Activated naive CD4-positive, alpha-beta T cell treated with anti-CD3 and anti-CD28 coated beads for 36 hours (primary cell): ENCODE measurements at regions of chr10 and their contacts with region 1.

Region 1: DNA sequence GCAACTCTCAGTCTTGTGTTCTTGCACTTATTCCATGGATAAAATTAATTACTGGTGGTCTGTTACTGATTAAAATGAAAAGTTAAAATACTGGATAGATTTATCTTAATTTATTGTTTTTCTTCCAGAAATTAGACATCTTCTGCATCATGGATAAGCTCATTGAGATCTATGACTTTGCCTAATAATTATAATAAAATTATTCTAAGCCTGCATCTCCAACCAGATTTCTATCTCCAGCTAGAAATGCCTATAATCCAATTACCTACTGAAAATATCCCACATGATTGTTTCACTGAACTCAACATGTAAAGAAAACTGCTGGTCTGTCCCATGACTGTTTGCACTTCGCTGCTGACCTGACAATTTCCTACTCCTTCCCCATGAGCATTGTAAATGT is 88.3 kb upstream of the ACBD5 start:
- DNase-seq: no peak
- H3K4me3 Mint-ChIP-seq: no peak overlapping the region
- H3K27ac Mint-ChIP-seq: no peak overlapping the region
- H3K4me1 Mint-ChIP-seq: no peaks in the 10 kb centered on the region
- H3K27me3 Mint-ChIP-seq: no peaks in the 10 kb centered on the region

Region 2: DNA sequence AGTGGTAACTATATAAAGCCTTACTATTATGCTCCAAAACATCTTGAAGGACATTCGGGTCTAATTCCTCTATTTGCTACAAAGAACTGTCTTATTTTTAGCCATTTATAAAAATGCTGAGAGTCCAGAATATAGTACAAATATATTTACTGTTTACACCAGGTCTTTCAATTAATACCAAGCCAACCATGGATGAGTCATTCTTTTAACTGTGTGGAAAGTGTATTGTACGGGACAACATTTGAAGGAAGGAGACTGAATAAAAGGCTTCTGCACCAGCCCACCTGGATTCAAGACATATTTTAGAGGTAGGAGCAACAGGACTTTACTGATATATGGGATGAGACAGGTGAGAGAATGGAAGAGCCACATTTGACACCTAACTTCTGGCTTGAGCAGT is 138.4 kb before region 1 on chr10:
- CTCF ChIA-PET with region 1: no interaction called
- intact Hi-C with region 1: no loop called
- DNase-seq: no peak
- H3K4me3 Mint-ChIP-seq: no peak overlapping the region
- H3K27ac Mint-ChIP-seq: no peak overlapping the region
- H3K4me1 Mint-ChIP-seq: no peaks in the 10 kb centered on the region
- H3K27me3 Mint-ChIP-seq: no peaks in the 10 kb centered on the region

Region 3: GRCh38 chr10:27360581-27361172 is 31.7 kb after region 1 on chr10:
- CTCF ChIA-PET with region 1: interaction called, 5 read pairs
- intact Hi-C with region 1: loop called (anchors 5 kb)
- DNase-seq: peak; percentile 89
- H3K4me3 Mint-ChIP-seq: no peak overlapping the region
- H3K27ac Mint-ChIP-seq: no peak overlapping the region
- H3K4me1 Mint-ChIP-seq: peaks cover 3% of the 10 kb centered on the region
- H3K27me3 Mint-ChIP-seq: no peaks in the 10 kb centered on the region

Region 4: GRCh38 chr10:27865221-27865638 is 536.3 kb after region 1 on chr10:
- CTCF ChIA-PET with region 1: no interaction called
- intact Hi-C with region 1: no loop called
- DNase-seq: no peak
- H3K4me3 Mint-ChIP-seq: no peak overlapping the region
- H3K27ac Mint-ChIP-seq: no peak overlapping the region
- H3K4me1 Mint-ChIP-seq: no peaks in the 10 kb centered on the region
- H3K27me3 Mint-ChIP-seq: peaks cover 8% of the 10 kb centered on the region